Activated CD4-positive, alpha-beta T cell treated with anti-CD3 and anti-CD28 coated beads for 36 hours (primary cell): ENCODE measurements at regions of chr20 and their contacts with region 1.

Region 1: GRCh38 chr20:38221119-38221589 is 39.4 kb downstream of the KIAA1755 start:
- DNase-seq: peak; percentile 83
- ATAC-seq: peak; percentile 83
- H3K4me3 Mint-ChIP-seq: no peak overlapping the region
- H3K27ac Mint-ChIP-seq: no peak overlapping the region
- H3K4me1 Mint-ChIP-seq: no peaks in the 10 kb centered on the region
- H3K27me3 Mint-ChIP-seq: peaks cover 2% of the 10 kb centered on the region

Region 2: DNA sequence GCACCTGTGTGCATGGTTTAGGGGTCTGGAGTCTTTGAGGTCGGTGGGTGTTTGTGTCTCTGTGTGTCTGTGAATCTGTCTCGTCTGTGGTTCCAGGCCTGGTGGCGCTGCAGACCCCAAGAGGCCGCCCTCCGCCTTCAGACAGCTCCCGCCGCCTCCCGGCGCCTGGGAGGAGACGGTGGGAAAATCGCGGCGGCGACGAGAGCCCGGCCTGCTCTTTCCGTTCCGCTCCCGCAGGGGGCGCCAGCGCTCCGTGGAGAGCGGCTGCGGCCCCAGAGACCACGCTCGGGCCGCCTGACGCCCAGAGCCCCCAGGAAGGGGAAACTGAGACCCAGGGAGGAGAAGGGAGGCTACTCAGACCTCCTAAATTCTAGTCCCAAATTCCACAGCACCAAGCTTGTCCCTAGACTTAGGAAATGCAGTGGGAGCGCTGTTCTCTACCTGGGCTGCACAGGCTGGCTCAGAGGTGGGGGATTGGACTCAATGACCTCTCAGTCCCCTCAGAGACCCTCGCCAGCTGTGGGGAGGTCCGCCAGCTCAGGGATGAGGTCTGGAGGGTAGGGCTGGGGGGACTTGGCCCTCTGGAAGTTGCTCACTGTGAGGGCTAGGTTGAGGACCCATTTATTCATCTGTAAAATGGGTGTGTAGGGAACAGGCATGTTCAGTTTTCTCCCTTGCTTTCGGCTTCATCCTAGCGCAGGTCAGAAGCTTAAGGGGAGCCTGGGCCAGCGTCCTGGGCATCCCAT is 656.6 kb before region 1 on chr20:
- CTCF ChIA-PET with region 1: interaction called, 6 read pairs
- POLR2A ChIA-PET with region 1: no interaction called
- intact Hi-C with region 1: loop called (anchors 1 to 2 kb)
- DNase-seq: peak; percentile 68
- ATAC-seq: peak; percentile 57
- H3K4me3 Mint-ChIP-seq: no peak overlapping the region
- H3K27ac Mint-ChIP-seq: no peak overlapping the region
- H3K4me1 Mint-ChIP-seq: no peaks in the 10 kb centered on the region
- H3K27me3 Mint-ChIP-seq: peaks cover 34% of the 10 kb centered on the region

Region 3: GRCh38 chr20:37901654-37902503 is 319.3 kb before region 1 on chr20:
- CTCF ChIA-PET with region 1: no interaction called
- POLR2A ChIA-PET with region 1: no interaction called
- intact Hi-C with region 1: loop called in 1 of 2 experiments (anchors 2 kb)
- DNase-seq: peak; percentile 56
- ATAC-seq: no peak
- H3K4me3 Mint-ChIP-seq: peak overlapping the region; percentile 29
- H3K27ac Mint-ChIP-seq: no peak overlapping the region
- H3K4me1 Mint-ChIP-seq: peaks cover 14% of the 10 kb centered on the region
- H3K27me3 Mint-ChIP-seq: peaks cover 49% of the 10 kb centered on the region

Region 4: GRCh38 chr20:38073307-38074071 is 147.7 kb before region 1 on chr20:
- CTCF ChIA-PET with region 1: interaction called, 62 read pairs
- POLR2A ChIA-PET with region 1: no interaction called
- intact Hi-C with region 1: loop called (anchors 1 kb)
- DNase-seq: peak; percentile 28
- ATAC-seq: peak; percentile 83
- H3K4me3 Mint-ChIP-seq: no peak overlapping the region
- H3K27ac Mint-ChIP-seq: peak overlapping the region; percentile 47
- H3K4me1 Mint-ChIP-seq: peaks cover 12% of the 10 kb centered on the region
- H3K27me3 Mint-ChIP-seq: no peaks in the 10 kb centered on the region

Region 5: GRCh38 chr20:38165089-38165989 is 55.8 kb before region 1 on chr20 and contains the start of gene TGM2:
- CTCF ChIA-PET with region 1: interaction called, 10 read pairs
- POLR2A ChIA-PET with region 1: no interaction called
- intact Hi-C with region 1: loop called in 1 of 2 experiments (anchors 5 kb)
- DNase-seq: peak; percentile 68
- ATAC-seq: peak; percentile 77
- H3K4me3 Mint-ChIP-seq: no peak within 1 kb of the TSS
- H3K27ac Mint-ChIP-seq: no peak within 1 kb of the TSS
- H3K4me1 Mint-ChIP-seq: peaks cover 8% of the 10 kb centered on the region
- H3K27me3 Mint-ChIP-seq: peaks cover 20% of the 10 kb centered on the region
- total RNA-seq, gene TGM2: 0.04 to 0.09 TPM